WTC11 (cell line): ENCODE measurements at regions of chr10 and their contacts with region 1.

Region 1: DNA sequence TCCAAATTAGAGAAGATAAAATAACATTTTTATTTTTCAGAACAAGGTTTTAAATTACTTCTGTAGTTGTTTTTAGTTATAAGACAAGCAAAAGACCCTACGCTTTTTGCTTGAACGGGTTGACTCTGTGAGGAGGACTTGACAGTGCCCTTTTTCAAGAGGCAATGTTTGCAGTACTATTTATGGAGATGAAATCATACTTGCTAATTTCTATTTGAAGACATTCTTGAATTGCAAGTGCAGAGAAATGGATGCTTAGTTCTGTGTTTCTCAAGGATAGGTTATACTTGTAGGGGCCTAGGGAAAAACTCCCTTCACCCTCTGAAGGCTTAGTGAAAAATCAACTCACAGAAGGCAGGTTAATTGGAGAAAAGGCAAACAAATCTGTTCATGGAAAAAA is 1229.5 kb downstream of the REEP3 start:
- DNase-seq: no peak
- ATAC-seq: no peak
- H3K4me3 Mint-ChIP-seq: no peak overlapping the region
- H3K27ac Mint-ChIP-seq: no peak overlapping the region
- H3K4me1 Mint-ChIP-seq: peaks cover 4% of the 10 kb centered on the region; the same call in 1 of the 2 replicates
- H3K27me3 Mint-ChIP-seq: no peaks in the 10 kb centered on the region
- CTCF ChIP-seq: no peak

Region 2: DNA sequence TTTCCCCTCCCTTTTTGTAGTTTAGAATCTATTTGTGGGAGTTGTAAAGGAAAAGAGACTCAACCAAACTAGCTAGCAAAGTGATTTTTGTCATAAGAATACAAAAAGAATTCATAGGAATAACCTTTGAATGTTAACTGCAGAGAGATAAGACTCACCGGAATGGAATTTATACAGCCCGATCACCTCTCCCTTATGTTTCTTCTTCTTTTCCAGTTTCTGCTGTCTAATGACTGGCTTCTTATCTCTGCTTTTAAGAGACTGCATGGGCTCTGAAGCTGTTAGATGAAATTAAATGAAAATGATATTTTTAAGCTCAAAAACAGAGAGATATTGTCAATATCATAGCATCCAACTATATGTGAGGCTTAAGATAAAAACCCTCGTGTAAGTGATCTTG is 133.6 kb before region 1 on chr10:
- CTCF ChIA-PET with region 1: no interaction called
- POLR2A ChIA-PET with region 1: interaction called, 14 read pairs
- DNase-seq: no peak
- ATAC-seq: no peak
- H3K4me3 Mint-ChIP-seq: no peak overlapping the region
- H3K27ac Mint-ChIP-seq: no peak overlapping the region
- H3K4me1 Mint-ChIP-seq: no peaks in the 10 kb centered on the region
- H3K27me3 Mint-ChIP-seq: no peaks in the 10 kb centered on the region
- CTCF ChIP-seq: no peak